GM10248 (cell line): ENCODE measurements at regions of chr5 and their contacts with region 1.

Region 1: DNA sequence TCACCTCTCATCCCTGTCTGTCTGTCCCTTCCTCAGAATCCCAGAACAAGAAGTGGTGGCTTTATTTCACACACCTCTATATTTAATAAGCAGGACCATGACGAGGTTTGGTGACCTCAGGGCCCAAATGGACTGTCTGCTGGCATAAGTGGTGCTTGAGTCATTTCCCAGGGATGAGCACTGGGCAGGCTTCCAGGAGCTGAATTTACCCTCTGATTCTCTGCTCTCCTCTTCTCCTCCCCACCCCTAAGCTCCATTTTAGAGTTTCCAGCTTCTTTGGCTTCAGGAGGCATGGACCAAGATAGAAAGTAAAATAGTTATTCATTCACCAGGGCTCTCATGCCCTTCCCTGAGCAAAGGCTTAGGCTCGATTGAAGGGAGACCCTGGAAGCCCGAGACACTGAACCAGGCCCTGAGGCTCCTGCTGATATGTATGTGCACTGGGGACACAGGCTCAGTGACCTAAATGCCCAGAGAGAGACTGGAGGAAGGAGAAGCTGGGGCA is 69.1 kb downstream of the PPARGC1B start:
- DNase-seq: no peak
- CTCF ChIP-seq: no peak

Region 2: DNA sequence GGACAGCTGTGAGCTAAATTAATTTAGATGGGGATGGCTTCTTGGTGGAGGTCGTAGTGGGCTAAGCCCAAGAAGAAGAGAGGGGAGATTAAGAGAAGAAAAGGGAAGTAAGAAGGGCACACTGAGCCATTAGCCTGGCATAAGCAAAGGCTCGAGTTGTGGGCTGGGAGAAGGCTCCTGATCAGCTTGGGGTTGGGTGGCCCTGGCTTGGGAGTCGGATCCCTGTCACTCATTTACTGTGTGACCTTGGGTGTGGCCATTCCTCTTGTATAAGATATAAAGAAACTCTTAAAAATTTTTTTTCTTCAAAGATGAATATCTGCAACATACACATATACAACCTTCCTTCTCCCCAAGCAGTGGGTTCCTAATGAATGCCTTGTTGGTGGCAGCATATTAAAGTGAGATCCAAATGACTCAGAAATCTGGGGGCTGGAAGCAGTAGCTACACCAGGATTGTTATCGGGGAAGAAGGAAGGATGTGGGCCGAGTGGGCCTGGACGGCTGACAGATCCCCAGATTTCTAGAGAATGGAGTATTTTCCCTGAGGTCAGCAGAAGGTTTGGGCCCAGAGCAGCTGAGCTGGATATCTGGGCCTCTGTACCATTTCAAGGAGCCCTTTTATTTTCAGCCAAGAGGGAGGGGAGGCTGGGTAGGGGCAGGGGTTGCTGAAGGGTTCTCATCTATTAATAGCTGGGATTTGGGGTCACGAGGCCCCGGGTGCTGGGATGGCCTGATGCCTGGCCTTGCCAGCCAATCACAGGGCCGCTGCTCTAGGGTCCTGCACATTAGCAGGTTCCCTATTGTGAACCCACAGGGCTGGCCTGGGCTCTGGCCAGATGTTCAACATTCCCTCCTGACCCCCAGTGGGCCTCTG is 16.9 kb before region 1 on chr5:
- CTCF ChIA-PET with region 1: interaction called, 54 read pairs
- POLR2A ChIA-PET with region 1: no interaction called
- DNase-seq: no peak
- CTCF ChIP-seq: no peak

Region 3: GRCh38 chr5:149817539-149818060 is 18.4 kb after region 1 on chr5:
- CTCF ChIA-PET with region 1: interaction called, 1,145 read pairs
- POLR2A ChIA-PET with region 1: interaction called, 14 read pairs
- DNase-seq: no peak
- CTCF ChIP-seq: no peak